Activated T-helper 1 cell treated with anti-CD3 and anti-CD28 coated beads, Interleukin-12 subunit alpha, Interleukin-12 subunit beta, Interleukin-2, Interleukin-4 antibody, amounts not matched to agents 30 ng/mL and 10 ng/mL and 1 ng/mL, durations not matched to agents 14 hours and 24 hours and 36 hours (primary cell): ENCODE measurements at regions of chrX and their contacts with region 1.

Region 1: GRCh38 chrX:106481341-106481740 is 130.4 kb upstream of the RADX start:
- DNase-seq: no peak
- H3K4me3 Mint-ChIP-seq: no peak overlapping the region
- H3K27ac Mint-ChIP-seq: no peak overlapping the region
- H3K4me1 Mint-ChIP-seq: peaks cover 27% of the 10 kb centered on the region
- H3K27me3 Mint-ChIP-seq: no peaks in the 10 kb centered on the region

Region 2: GRCh38 chrX:106454991-106455390 is 26.4 kb before region 1 on chrX:
- intact Hi-C with region 1: loop called (anchors 2 kb)
- DNase-seq: no peak
- H3K4me3 Mint-ChIP-seq: no peak overlapping the region
- H3K27ac Mint-ChIP-seq: no peak overlapping the region
- H3K4me1 Mint-ChIP-seq: no peaks in the 10 kb centered on the region
- H3K27me3 Mint-ChIP-seq: no peaks in the 10 kb centered on the region

Region 3: DNA sequence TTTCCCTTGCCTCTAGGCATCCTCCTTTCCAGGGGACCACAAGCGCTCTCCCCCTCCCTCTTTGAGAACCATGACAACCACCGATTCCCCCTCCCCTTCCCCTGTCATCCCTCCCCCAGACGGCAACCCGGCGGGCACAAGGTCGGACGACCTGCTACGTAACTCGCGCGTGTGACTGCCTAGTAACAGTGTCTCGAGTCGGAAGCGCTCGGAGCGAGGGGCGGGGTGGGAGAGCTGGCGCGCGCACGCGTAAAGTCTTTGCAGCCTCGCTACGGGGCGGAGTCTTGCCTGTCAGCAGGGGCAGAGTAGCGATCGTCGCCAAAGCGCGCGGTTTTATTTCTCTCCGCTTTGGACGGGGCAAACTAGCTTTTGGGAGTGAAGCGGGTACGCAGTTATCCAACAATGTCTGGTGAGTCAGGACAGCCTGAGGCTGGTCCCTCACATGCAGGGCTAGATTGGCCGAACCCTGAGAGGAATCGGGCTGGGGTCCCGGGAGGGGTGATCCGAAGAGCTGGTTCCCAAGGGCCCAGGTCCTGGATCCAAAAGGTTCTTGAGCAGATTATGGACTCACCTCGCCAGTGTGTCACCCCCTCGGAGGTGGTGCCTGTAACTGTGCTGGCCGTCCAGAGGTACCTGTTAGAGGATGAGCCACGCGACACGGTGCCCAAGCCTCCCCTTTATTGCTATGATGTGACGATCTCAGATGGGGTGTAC is 130.5 kb after region 1 on chrX and contains the start of gene RADX:
- intact Hi-C with region 1: loop called (anchors 1 kb)
- DNase-seq: peak; percentile 82
- H3K4me3 Mint-ChIP-seq: peak within 1 kb of the TSS; percentile 93
- H3K27ac Mint-ChIP-seq: peak within 1 kb of the TSS; percentile 89
- H3K4me1 Mint-ChIP-seq: peaks cover 26% of the 10 kb centered on the region
- H3K27me3 Mint-ChIP-seq: no peaks in the 10 kb centered on the region
- total RNA-seq, gene RADX: 5.6 and 6.3 TPM in 2 replicates

Region 4: GRCh38 chrX:106791495-106791894 is 310.2 kb after region 1 on chrX:
- intact Hi-C with region 1: loop called (anchors 1 kb)
- DNase-seq: no peak
- H3K4me3 Mint-ChIP-seq: no peak overlapping the region
- H3K27ac Mint-ChIP-seq: no peak overlapping the region
- H3K4me1 Mint-ChIP-seq: no peaks in the 10 kb centered on the region
- H3K27me3 Mint-ChIP-seq: no peaks in the 10 kb centered on the region

Region 5: GRCh38 chrX:106874075-106874474 is 392.7 kb after region 1 on chrX:
- intact Hi-C with region 1: loop called (anchors 5 kb)
- DNase-seq: no peak
- H3K4me3 Mint-ChIP-seq: no peak overlapping the region
- H3K27ac Mint-ChIP-seq: no peak overlapping the region
- H3K4me1 Mint-ChIP-seq: no peaks in the 10 kb centered on the region
- H3K27me3 Mint-ChIP-seq: no peaks in the 10 kb centered on the region

Region 6: GRCh38 chrX:108091266-108091877 is 1610.0 kb after region 1 on chrX and contains the starts of genes ATG4A and PSMD10:
- intact Hi-C with region 1: loop called (anchors 1 kb)
- DNase-seq: peak; percentile 85
- H3K4me3 Mint-ChIP-seq: no peak within 1 kb of the TSS
- H3K27ac Mint-ChIP-seq: no peak within 1 kb of the TSS
- H3K4me1 Mint-ChIP-seq: peaks cover 17% of the 10 kb centered on the region
- H3K27me3 Mint-ChIP-seq: no peaks in the 10 kb centered on the region
- total RNA-seq, gene ATG4A: 9.6 and 9.8 TPM in 2 replicates
- total RNA-seq, gene PSMD10: 42.5 and 44.1 TPM in 2 replicates